Endothelial cell of umbilical vein (primary cell): ENCODE measurements at regions of chr18 and their contacts with region 1.

Region 1: DNA sequence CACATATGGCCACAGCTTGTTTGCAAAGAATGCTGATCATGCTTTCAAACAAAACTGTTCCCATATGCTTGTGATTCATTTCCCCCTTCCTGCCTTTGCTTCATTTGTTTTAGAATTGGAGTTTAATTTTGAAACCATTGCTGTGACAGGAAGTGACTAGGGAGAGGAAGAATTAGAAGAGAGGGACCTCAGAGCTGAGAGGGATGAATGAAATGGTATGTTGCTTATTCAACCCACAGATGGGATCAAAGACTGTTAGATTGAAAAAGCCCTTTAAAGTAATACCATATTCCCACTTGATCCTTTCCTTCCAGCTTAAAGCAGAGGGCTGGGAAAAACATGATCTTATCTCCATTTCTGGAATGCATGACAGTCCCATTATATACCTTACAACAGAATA is 106.2 kb upstream of the RNF152 start:
- DNase-seq: peak; percentile 95
- H3K4me3 ChIP-seq: no peak overlapping the region
- H3K27ac ChIP-seq: peak overlapping the region; percentile 83
- H3K4me1 ChIP-seq: peaks cover 49% of the 10 kb centered on the region
- H3K27me3 ChIP-seq: no peaks in the 10 kb centered on the region
- CTCF ChIP-seq: no peak
- POLR2A ChIP-seq: no peak

Region 2: GRCh38 chr18:61581578-61582201 is 417.3 kb before region 1 on chr18:
- CTCF ChIA-PET with region 1: interaction called, 4 read pairs
- POLR2A ChIA-PET with region 1: no interaction called
- dilution Hi-C with region 1: no loop called
- intact Hi-C with region 1: loop called (anchors 2 kb)
- DNase-seq: peak; percentile 77
- H3K4me3 ChIP-seq: peak overlapping the region; percentile 40 to 56 (median 54)
- H3K27ac ChIP-seq: peak overlapping the region; percentile 25
- H3K4me1 ChIP-seq: peaks cover 18% of the 10 kb centered on the region
- H3K27me3 ChIP-seq: no peaks in the 10 kb centered on the region
- CTCF ChIP-seq: peak; percentile 97
- POLR2A ChIP-seq: no peak

Region 3: DNA sequence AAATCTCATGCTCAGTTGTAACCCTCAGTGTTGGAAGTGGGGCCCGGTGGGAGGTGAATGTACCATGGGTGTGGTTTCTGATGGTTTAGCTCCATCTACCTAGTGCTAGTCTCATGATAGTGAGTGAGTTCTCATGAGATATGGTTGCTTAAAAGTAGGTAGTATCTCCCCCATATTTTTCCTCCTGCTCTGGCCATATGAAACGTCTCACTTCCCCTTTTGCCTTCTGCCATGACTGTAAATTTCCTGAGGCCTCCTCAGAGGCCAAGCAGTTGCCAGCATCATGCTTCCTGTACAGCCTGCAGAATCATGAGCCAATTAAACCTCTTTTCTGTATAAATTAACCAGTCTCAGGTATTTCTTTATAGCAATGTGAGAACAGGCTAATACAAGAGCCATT is 43.3 kb before region 1 on chr18:
- CTCF ChIA-PET with region 1: interaction called, 4 read pairs
- POLR2A ChIA-PET with region 1: no interaction called
- dilution Hi-C with region 1: no loop called
- intact Hi-C with region 1: loop called (anchors 1 kb)
- DNase-seq: peak; percentile 56
- H3K4me3 ChIP-seq: no peak overlapping the region
- H3K27ac ChIP-seq: no peak overlapping the region
- H3K4me1 ChIP-seq: peaks cover 16% of the 10 kb centered on the region
- H3K27me3 ChIP-seq: no peaks in the 10 kb centered on the region
- CTCF ChIP-seq: no peak
- POLR2A ChIP-seq: no peak

Region 4: DNA sequence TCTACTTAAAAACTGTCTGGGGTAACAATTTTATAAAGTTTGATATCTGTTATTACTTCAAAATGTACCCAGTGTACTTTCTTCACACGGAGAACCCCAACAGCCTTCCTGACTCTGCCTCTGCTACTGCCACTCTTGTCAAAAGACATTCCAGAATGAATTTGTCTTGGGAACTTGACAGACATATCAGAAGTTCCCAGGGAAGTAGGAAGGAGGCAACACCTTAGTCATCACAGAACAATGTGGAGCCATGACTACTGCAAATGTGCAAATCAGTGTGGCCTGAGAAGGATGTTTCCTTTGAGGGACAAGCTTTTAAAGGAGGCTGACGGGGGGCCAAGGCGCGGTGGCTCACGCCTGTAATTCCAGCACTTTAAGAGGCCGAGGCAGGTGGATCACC is 27.6 kb after region 1 on chr18:
- CTCF ChIA-PET with region 1: no interaction called
- POLR2A ChIA-PET with region 1: no interaction called
- dilution Hi-C with region 1: no loop called
- intact Hi-C with region 1: loop called (anchors 2 kb)
- DNase-seq: peak; percentile 84
- H3K4me3 ChIP-seq: no peak overlapping the region
- H3K27ac ChIP-seq: peak overlapping the region; percentile 34
- H3K4me1 ChIP-seq: peaks cover 2% of the 10 kb centered on the region
- H3K27me3 ChIP-seq: no peaks in the 10 kb centered on the region
- CTCF ChIP-seq: no peak
- POLR2A ChIP-seq: no peak

Region 5: GRCh38 chr18:62061821-62062478 is 63.0 kb after region 1 on chr18:
- CTCF ChIA-PET with region 1: interaction called, 3 read pairs
- POLR2A ChIA-PET with region 1: no interaction called
- dilution Hi-C with region 1: no loop called
- intact Hi-C with region 1: loop called (anchors 1 kb)
- DNase-seq: no peak
- H3K4me3 ChIP-seq: no peak overlapping the region
- H3K27ac ChIP-seq: peak overlapping the region; percentile 30
- H3K4me1 ChIP-seq: peaks cover 19% of the 10 kb centered on the region
- H3K27me3 ChIP-seq: no peaks in the 10 kb centered on the region
- CTCF ChIP-seq: no peak
- POLR2A ChIP-seq: no peak

Region 6: DNA sequence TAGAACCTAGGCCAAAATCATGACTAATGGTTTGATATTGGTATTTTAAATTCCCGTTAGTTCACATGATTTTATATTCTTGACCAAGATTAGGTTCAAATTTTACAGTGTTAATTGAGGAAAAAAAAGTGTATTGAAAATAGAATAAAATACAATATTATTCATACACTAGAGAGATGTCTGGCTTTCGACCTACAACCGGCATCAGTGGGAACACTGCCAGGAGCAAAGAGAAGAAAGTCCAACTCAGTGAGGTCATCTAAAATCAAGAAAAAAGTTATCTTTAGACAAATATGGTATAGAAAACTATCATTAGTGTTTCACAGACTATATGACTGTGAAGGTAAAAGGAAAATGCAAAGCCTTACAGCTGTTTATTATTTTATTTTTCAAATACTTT is 106.4 kb after region 1 on chr18:
- CTCF ChIA-PET with region 1: interaction called, 3 read pairs
- POLR2A ChIA-PET with region 1: no interaction called
- dilution Hi-C with region 1: no loop called
- intact Hi-C with region 1: loop called (anchors 2 kb)
- DNase-seq: peak; percentile 64
- H3K4me3 ChIP-seq: no peak overlapping the region
- H3K27ac ChIP-seq: no peak overlapping the region
- H3K4me1 ChIP-seq: peaks cover 25% of the 10 kb centered on the region
- H3K27me3 ChIP-seq: no peaks in the 10 kb centered on the region
- CTCF ChIP-seq: no peak
- POLR2A ChIP-seq: no peak

Region 7: GRCh38 chr18:62118328-62118727 is 119.4 kb after region 1 on chr18:
- CTCF ChIA-PET with region 1: no interaction called
- POLR2A ChIA-PET with region 1: no interaction called
- dilution Hi-C with region 1: no loop called
- intact Hi-C with region 1: no loop called
- DNase-seq: peak; percentile 6
- H3K4me3 ChIP-seq: no peak overlapping the region
- H3K27ac ChIP-seq: no peak overlapping the region
- H3K4me1 ChIP-seq: peaks cover 7% of the 10 kb centered on the region
- H3K27me3 ChIP-seq: no peaks in the 10 kb centered on the region
- CTCF ChIP-seq: no peak
- POLR2A ChIP-seq: no peak